Motor neuron (in vitro differentiated cells): ENCODE measurements at regions of chr3 and their contacts with region 1.

Region 1: DNA sequence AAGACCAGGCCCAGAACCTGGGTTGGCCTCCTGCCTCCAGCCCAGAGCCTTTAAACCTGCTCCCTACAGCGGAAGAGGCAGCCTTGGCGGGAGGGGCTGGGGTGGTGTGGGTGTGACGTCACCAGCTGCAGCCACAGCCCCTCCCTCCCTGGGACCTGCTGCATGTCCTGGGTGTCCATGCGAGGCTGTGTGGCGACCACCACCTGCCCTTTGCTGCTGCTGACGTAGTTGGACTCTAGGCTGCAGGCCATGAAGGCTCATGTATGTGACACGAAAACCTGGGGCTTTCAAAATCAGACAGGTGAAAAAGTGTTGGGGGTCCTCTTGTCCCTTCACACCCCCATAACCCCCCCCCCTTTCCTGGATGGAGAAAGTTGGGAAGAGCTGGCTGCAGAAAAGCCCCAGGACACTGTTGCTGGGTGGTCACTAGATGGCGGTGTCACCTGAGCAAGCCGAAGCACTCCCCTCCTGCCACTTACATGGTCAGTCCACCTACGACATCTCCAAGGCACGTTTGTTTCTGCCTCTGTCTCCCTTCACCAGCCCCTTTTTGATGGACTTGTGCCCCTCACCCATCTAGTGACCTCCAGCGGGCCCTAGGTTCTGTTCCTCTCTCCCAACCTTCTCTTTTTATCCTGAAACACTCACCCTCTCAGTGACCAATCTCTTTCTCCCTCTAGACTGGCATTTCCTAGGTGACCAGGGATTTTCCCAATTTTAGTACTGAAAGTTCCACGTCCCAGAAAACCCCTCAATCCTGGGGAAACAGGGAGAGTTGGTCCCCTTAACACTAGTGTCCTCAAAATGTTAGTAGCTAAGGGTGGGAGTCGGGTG is 35.2 kb downstream of the SLC6A20 start:
- ATAC-seq: peak; percentile 70 to 95 (median 82)
- H3K4me3 ChIP-seq: no peak overlapping the region
- H3K27ac ChIP-seq: no peak overlapping the region
- H3K4me1 ChIP-seq: no peaks in the 10 kb centered on the region

Region 2: GRCh38 chr3:45387636-45388348 is 373.3 kb before region 1 on chr3:
- in situ Hi-C with region 1: no loop called
- ATAC-seq: no peak
- H3K4me3 ChIP-seq: peak overlapping the region; percentile 69 to 99 (median 89)
- H3K27ac ChIP-seq: no peak overlapping the region
- H3K4me1 ChIP-seq: peaks cover 0 to 8% of the 10 kb centered on the region in 2 donors

Region 3: DNA sequence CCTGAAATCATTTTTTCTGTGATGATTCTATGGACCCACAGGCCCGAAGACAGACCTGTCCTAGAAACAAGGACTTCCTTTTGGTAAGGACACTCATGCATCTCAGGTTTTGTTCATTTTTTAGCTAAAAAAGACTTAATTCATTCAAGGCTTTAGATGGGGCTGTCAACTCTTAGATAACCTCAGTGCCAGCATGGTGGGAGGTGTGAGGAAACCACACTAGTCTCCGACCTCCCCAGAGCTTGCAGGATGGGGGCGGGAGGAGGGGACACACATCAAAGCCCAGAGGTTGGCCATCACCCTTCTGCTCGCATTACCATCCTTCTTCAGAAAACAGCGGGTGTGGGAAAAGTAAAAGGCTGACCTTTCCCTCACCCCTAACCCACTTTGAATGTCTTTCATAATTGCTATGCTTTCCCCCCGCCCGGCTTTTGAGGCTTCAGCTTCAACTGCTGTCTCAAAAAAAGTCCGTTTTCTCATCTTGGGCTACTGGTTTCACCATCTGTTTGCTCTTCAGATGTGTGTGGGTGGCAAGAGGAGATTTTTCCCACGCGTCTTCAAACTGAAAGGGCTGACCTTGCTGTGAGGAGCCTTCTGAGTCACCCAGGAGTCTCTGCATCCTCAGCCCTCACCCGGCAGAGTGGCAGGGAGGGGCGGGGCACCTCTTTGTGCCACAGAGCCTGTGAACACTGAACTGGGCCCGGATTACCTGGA is 154.6 kb after region 1 on chr3:
- in situ Hi-C with region 1: loop called in 3 of 9 experiments (anchors 10 to 25 kb)
- ATAC-seq: peak; percentile 65 to 91 (median 74)
- H3K4me3 ChIP-seq: no peak overlapping the region
- H3K27ac ChIP-seq: no peak overlapping the region
- H3K4me1 ChIP-seq: peaks cover 16 to 18% of the 10 kb centered on the region in 2 donors

Region 4: DNA sequence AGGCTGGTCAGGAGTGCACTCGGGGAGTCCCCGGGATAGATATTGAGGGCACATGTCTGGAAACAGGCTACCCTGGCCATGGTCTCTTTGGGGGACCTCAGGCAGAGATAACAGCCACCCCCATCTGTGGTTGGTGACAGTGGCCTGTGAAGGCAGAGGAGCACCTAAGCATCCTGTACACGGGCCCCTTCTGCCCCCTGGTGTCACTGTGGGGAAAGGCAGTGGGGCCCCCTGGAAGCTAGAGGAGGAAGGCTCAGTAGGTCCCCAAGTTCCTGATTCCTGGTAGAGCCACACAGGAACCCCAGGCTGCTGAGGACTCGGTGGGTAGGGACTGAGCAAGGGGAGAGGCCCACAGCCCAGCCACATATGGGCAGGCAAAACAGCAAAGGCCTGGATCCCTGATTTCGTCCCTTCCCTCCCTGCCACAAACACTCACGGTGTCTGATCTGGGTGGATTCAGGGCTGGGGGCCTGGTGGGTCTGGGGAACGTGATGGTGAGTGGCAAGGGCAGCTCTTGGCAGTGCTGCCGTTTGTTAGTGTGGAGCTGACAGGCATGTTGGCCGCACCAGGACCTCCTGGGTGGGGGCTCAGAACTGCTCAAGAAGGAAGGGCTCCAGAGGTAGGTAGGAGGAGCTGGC is 168.1 kb after region 1 on chr3:
- in situ Hi-C with region 1: loop called in 4 of 9 experiments (anchors 10 to 25 kb)
- ATAC-seq: peak; percentile 70 to 90 (median 78)
- H3K4me3 ChIP-seq: no peak overlapping the region
- H3K27ac ChIP-seq: no peak overlapping the region
- H3K4me1 ChIP-seq: no peaks in the 10 kb centered on the region